ENCODE measurements at regions of chr18 and their contacts with region 1.

Region 1: DNA sequence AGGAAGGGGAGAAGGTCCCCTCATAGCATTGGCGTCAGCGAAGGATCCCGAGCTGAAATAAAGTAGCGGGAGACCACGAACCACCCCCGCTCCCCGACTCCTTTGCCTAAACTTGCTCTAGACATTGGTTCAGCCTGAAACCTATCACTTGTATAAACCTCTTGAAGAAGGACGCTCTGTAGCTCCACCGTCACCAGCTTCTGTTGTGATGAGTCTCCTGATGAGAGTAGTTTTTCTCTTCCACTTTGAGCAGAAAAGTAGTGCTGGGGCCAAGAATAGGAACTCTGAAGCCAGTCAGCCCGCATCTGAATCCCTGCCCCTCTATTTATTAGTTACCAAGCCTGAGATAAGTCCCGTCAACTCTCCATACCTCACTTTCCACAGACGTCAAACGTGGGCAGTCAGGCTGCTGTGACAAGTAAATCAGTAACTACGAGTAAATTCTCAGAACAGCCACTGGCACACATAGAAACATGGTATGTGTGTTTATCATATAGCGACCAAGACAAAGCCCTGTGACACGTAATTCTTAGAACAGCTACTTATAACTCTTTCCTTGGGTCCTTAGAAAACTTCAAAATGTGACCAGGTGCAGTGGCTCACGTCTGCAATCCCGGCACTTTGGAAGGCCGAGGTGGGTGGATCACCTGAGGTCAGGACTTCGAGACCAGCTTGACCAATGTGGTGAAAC is 61.7 kb downstream of the CD226 start:
- DNase-seq: peak; percentile 72
- ATAC-seq: peak; percentile 79
- H3K4me3 ChIP-seq: no peak overlapping the region
- H3K27ac ChIP-seq: peak overlapping the region; percentile 60
- H3K4me1 ChIP-seq: no peaks in the 10 kb centered on the region; the same call in 1 of the 2 replicates
- H3K27me3 ChIP-seq: no peaks in the 10 kb centered on the region
- CTCF ChIP-seq: no peak
- EP300 ChIP-seq: peak; percentile 97 to 98
- POLR2A ChIP-seq: no peak
- RAD21 ChIP-seq: no peak

Region 2: DNA sequence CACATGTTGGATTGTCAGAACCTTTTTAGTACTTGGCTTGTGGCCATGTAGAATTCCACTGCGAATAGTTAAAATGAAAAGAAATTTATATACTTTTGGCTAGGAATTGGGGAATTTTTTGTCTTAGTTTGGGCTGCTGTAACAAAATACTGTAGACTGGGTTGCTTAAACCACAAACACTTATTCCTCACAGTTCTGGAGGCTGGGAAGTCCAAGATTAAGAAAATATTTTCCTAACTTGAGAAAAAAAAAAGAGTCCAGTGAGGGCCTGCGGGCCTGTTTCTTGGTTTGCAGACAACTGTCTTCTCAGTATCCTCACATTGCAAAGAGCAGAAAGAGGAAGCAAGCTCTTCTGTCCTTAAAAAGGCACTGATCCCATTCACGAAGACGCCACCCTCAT is 20.2 kb before region 1 on chr18:
- CTCF ChIA-PET with region 1: interaction called, 8 read pairs
- POLR2A ChIA-PET with region 1: interaction called, 3 read pairs
- RAD21 ChIA-PET with region 1: interaction called, 7 read pairs
- SMC1A ChIA-PET with region 1: interaction called, 46 read pairs
- in situ Hi-C with region 1: no loop called
- intact Hi-C with region 1: loop called (anchors 2 kb)
- DNase-seq: no peak
- ATAC-seq: no peak
- H3K4me3 ChIP-seq: no peak overlapping the region
- H3K27ac ChIP-seq: no peak overlapping the region
- H3K4me1 ChIP-seq: peaks cover 5% of the 10 kb centered on the region; the same call in 1 of the 2 replicates
- H3K27me3 ChIP-seq: no peaks in the 10 kb centered on the region
- CTCF ChIP-seq: no peak
- EP300 ChIP-seq: no peak
- POLR2A ChIP-seq: no peak
- RAD21 ChIP-seq: no peak

Region 3: GRCh38 chr18:69935319-69936190 is 49.6 kb after region 1 on chr18:
- CTCF ChIA-PET with region 1: interaction called, 4 read pairs
- POLR2A ChIA-PET with region 1: interaction called, 6 read pairs
- RAD21 ChIA-PET with region 1: interaction called, 11 read pairs
- SMC1A ChIA-PET with region 1: interaction called, 16 read pairs
- in situ Hi-C with region 1: no loop called
- intact Hi-C with region 1: no loop called
- DNase-seq: peak; percentile 89
- ATAC-seq: peak; percentile 92
- H3K4me3 ChIP-seq: no peak overlapping the region
- H3K27ac ChIP-seq: peak overlapping the region; percentile 88
- H3K4me1 ChIP-seq: peaks cover 40% of the 10 kb centered on the region
- H3K27me3 ChIP-seq: no peaks in the 10 kb centered on the region
- CTCF ChIP-seq: no peak
- EP300 ChIP-seq: peak; percentile 89 to 94
- POLR2A ChIP-seq: peak; percentile 57
- RAD21 ChIP-seq: no peak

Region 4: DNA sequence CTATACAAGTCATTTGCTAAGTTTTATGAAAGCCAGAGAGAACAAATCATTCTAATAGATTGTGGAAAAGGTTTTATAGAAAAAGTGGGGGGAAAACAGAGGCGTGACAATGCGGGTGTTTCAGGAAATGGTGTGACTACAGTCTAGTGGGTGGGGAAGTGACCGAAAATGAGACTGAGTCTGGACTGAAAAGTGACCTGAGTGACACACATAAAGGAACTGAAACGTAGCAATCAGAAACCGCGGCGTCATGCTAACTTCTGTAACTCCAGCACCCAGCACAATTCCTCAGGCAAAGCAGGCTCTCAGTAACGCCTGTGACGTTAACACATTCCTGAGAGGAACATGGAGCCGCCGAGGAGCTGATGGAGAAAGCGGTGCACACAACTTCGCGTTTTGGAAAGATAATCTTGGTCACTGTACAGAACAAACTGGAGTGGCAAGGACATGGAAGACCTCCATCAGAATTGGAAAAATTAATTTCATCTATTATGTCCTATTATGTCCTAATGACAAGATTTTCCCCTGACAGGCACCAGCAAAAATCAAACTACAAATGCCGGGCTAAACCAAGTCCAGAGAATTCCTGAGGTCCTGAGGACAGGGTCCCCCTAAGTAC is 63.0 kb after region 1 on chr18:
- CTCF ChIA-PET with region 1: no interaction called
- POLR2A ChIA-PET with region 1: interaction called, 3 read pairs
- RAD21 ChIA-PET with region 1: no interaction called
- SMC1A ChIA-PET with region 1: interaction called, 3 read pairs
- in situ Hi-C with region 1: no loop called
- intact Hi-C with region 1: loop called (anchors 2 kb)
- DNase-seq: peak; percentile 88
- ATAC-seq: peak; percentile 83
- H3K4me3 ChIP-seq: peak overlapping the region; percentile 33; the same call in 1 of the 2 replicates
- H3K27ac ChIP-seq: peak overlapping the region; percentile 80
- H3K4me1 ChIP-seq: peaks cover 28% of the 10 kb centered on the region
- H3K27me3 ChIP-seq: no peaks in the 10 kb centered on the region
- CTCF ChIP-seq: no peak
- EP300 ChIP-seq: peak; percentile 97 to 99
- POLR2A ChIP-seq: no peak
- RAD21 ChIP-seq: peak; percentile 1; the same call in 1 of the 2 replicates

Region 5: GRCh38 chr18:70058916-70059315 is 172.9 kb after region 1 on chr18:
- CTCF ChIA-PET with region 1: no interaction called
- POLR2A ChIA-PET with region 1: no interaction called
- RAD21 ChIA-PET with region 1: interaction called, 6 read pairs
- SMC1A ChIA-PET with region 1: interaction called, 8 read pairs
- in situ Hi-C with region 1: no loop called
- intact Hi-C with region 1: loop called (anchors 5 kb)
- DNase-seq: peak; percentile 59
- ATAC-seq: peak; percentile 99
- H3K4me3 ChIP-seq: no peak overlapping the region
- H3K27ac ChIP-seq: peak overlapping the region; percentile 13; the same call in 1 of the 2 replicates
- H3K4me1 ChIP-seq: no peaks in the 10 kb centered on the region
- H3K27me3 ChIP-seq: no peaks in the 10 kb centered on the region
- CTCF ChIP-seq: no peak
- EP300 ChIP-seq: peak; percentile 30 to 70; a peak in 2 of 4 replicates
- POLR2A ChIP-seq: no peak
- RAD21 ChIP-seq: no peak